T-cell (primary cell): ENCODE measurements at regions of chr11 and their contacts with region 1.

Region 1: GRCh38 chr11:66119348-66120133 is 49.5 kb downstream of the PACS1 start:
- DNase-seq: no peak
- ATAC-seq: no peak
- H3K4me3 ChIP-seq: no peak overlapping the region
- H3K4me3 Mint-ChIP-seq: peak overlapping the region in 2 of 3 donors; percentile 13 to 74
- H3K27ac ChIP-seq: peak overlapping the region; percentile 22
- H3K27ac Mint-ChIP-seq: peak overlapping the region; percentile 84 to 85
- H3K4me1 ChIP-seq: peaks cover 57 to 58% of the 10 kb centered on the region in 2 experiments
- H3K4me1 Mint-ChIP-seq: peaks cover 91 to 92% (median 91%) of the 10 kb centered on the region in 3 donors
- H3K27me3 ChIP-seq: no peaks in the 10 kb centered on the region
- H3K27me3 Mint-ChIP-seq: no peaks in the 10 kb centered on the region

Region 2: GRCh38 chr11:66051766-66052663 is 67.5 kb before region 1 on chr11 and contains the start of gene SF3B2:
- CTCF ChIA-PET with region 1: no interaction called
- POLR2A ChIA-PET with region 1: interaction called in 1 of 2 experiments, 11 read pairs
- DNase-seq: peak; percentile 88 to 97 (median 92)
- ATAC-seq: peak; percentile 95 to 99 (median 98)
- H3K4me3 ChIP-seq: peak within 1 kb of the TSS; percentile 95
- H3K4me3 Mint-ChIP-seq: peak within 1 kb of the TSS; percentile 97 to 100 (median 98)
- H3K27ac ChIP-seq: peak within 1 kb of the TSS; percentile 86
- H3K27ac Mint-ChIP-seq: peak within 1 kb of the TSS; percentile 98 to 99
- H3K4me1 ChIP-seq: peaks cover 11 to 32% of the 10 kb centered on the region in 2 experiments
- H3K4me1 Mint-ChIP-seq: peaks cover 30 to 38% (median 32%) of the 10 kb centered on the region in 3 donors
- H3K27me3 ChIP-seq: peaks cover 0 to 24% of the 10 kb centered on the region in 2 experiments
- H3K27me3 Mint-ChIP-seq: peaks cover 4 to 6% of the 10 kb centered on the region in 2 donors
- total RNA-seq, gene SF3B2: 189 to 264 (median 224) TPM

Region 3: DNA sequence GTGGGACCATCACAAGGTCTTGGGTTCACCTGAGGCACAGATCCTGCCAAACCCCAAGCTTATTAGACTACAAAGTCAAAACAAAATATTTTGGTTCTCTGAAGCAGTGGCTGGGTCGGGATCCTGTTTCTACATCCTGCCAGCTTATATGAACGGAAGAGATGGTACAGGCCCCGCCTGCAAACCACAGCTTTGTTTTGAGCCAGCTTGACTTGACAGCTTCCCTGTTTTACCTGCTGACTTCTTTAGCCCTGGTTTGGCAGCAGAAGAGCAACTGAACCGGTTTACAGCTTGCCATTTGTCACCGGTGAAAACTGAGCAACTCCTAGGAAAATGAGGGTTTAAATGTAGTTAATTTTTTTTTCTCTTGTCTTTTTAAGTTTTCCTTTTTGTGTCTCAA is 38.0 kb before region 1 on chr11:
- CTCF ChIA-PET with region 1: interaction called in 1 of 2 experiments, 9 read pairs
- POLR2A ChIA-PET with region 1: interaction called, 7 to 12 read pairs
- DNase-seq: peak; percentile 52 to 91 (median 83)
- ATAC-seq: peak; percentile 92 to 98 (median 94)
- H3K4me3 ChIP-seq: peak overlapping the region in 1 of 2 donors; percentile 26
- H3K4me3 Mint-ChIP-seq: peak overlapping the region; percentile 83 to 90 (median 85)
- H3K27ac ChIP-seq: peak overlapping the region; percentile 82
- H3K27ac Mint-ChIP-seq: peak overlapping the region; percentile 95 to 100
- H3K4me1 ChIP-seq: peaks cover 58 to 68% of the 10 kb centered on the region in 2 experiments
- H3K4me1 Mint-ChIP-seq: peaks cover 90 to 94% (median 92%) of the 10 kb centered on the region in 3 donors
- H3K27me3 ChIP-seq: no peaks in the 10 kb centered on the region
- H3K27me3 Mint-ChIP-seq: no peaks in the 10 kb centered on the region

Region 4: GRCh38 chr11:66136752-66137123 is 17.2 kb after region 1 on chr11:
- CTCF ChIA-PET with region 1: interaction called, 3 read pairs
- POLR2A ChIA-PET with region 1: interaction called in 1 of 2 experiments, 10 read pairs
- DNase-seq: no peak
- ATAC-seq: no peak
- H3K4me3 ChIP-seq: no peak overlapping the region
- H3K4me3 Mint-ChIP-seq: no peak overlapping the region
- H3K27ac ChIP-seq: no peak overlapping the region
- H3K27ac Mint-ChIP-seq: peak overlapping the region; percentile 1 to 76
- H3K4me1 ChIP-seq: peaks cover 0 to 19% of the 10 kb centered on the region in 2 experiments
- H3K4me1 Mint-ChIP-seq: peaks cover 59 to 67% (median 65%) of the 10 kb centered on the region in 3 donors
- H3K27me3 ChIP-seq: no peaks in the 10 kb centered on the region
- H3K27me3 Mint-ChIP-seq: no peaks in the 10 kb centered on the region

Region 5: GRCh38 chr11:66371627-66372415 is 252.3 kb after region 1 on chr11 and contains the start of gene SLC29A2:
- CTCF ChIA-PET with region 1: no interaction called
- POLR2A ChIA-PET with region 1: no interaction called
- DNase-seq: peak; percentile 52 to 81 (median 70)
- ATAC-seq: peak; percentile 80 to 84 (median 82)
- H3K4me3 ChIP-seq: peak within 1 kb of the TSS; percentile 75 to 83
- H3K4me3 Mint-ChIP-seq: peak within 1 kb of the TSS; percentile 81 to 89 (median 86)
- H3K27ac ChIP-seq: peak within 1 kb of the TSS; percentile 75
- H3K27ac Mint-ChIP-seq: peak within 1 kb of the TSS; percentile 90 to 91
- H3K4me1 ChIP-seq: peaks cover 6 to 15% of the 10 kb centered on the region in 2 experiments
- H3K4me1 Mint-ChIP-seq: peaks cover 0 to 17% (median 13%) of the 10 kb centered on the region in 3 donors
- H3K27me3 ChIP-seq: no peaks in the 10 kb centered on the region
- H3K27me3 Mint-ChIP-seq: no peaks in the 10 kb centered on the region
- total RNA-seq, gene SLC29A2: 8.5 to 14.7 (median 14.4) TPM